Calu3 (cell line): ENCODE measurements at regions of chr15 and their contacts with region 1.

Region 1: GRCh38 chr15:70488002-70488605 is 275.3 kb downstream of the UACA start:
- DNase-seq: peak; percentile 86
- H3K4me3 Mint-ChIP-seq: no peak overlapping the region
- H3K27ac Mint-ChIP-seq: no peak overlapping the region
- H3K4me1 Mint-ChIP-seq: peaks cover 45% of the 10 kb centered on the region
- H3K27me3 Mint-ChIP-seq: peaks cover 4% of the 10 kb centered on the region
- CTCF ChIP-seq: peak; percentile 95

Region 2: DNA sequence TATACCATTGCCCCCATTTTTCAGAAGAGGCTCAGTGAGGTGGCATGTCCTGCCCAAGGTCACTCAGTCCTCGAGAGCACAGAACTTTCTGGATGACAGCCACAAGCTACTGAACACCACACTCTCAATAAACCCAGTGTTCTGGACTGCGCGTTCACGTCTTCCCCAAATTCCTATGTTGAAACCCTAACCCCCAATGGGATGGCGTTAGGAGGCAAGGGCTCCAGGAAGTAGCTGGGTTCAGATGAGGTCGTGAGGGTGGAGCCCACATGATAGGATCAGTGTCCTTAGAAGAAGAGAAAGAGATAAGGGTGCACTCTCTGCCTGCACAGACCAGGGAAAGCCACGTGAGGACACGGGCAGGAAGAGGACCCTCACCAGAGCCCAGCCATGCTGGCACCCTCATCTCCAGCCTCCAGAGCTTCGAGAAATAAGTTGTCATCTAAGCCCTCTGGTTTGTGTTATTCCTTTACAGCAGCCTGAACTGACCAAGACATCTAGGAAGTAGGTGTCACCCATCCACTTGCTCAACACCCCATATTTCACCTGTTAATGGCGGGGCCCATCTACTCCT is 48.7 kb before region 1 on chr15:
- CTCF ChIA-PET with region 1: no interaction called
- intact Hi-C with region 1: no loop called
- DNase-seq: no peak
- H3K4me3 Mint-ChIP-seq: no peak overlapping the region
- H3K27ac Mint-ChIP-seq: no peak overlapping the region
- H3K4me1 Mint-ChIP-seq: peaks cover 25% of the 10 kb centered on the region
- H3K27me3 Mint-ChIP-seq: peaks cover 34% of the 10 kb centered on the region
- CTCF ChIP-seq: no peak

Region 3: GRCh38 chr15:70474471-70475396 is 13.4 kb before region 1 on chr15:
- CTCF ChIA-PET with region 1: interaction called, 10 read pairs
- intact Hi-C with region 1: no loop called
- DNase-seq: peak; percentile 66
- H3K4me3 Mint-ChIP-seq: peak overlapping the region; percentile 50
- H3K27ac Mint-ChIP-seq: peak overlapping the region; percentile 75
- H3K4me1 Mint-ChIP-seq: peaks cover 29% of the 10 kb centered on the region
- H3K27me3 Mint-ChIP-seq: peaks cover 6% of the 10 kb centered on the region
- CTCF ChIP-seq: no peak

Region 4: GRCh38 chr15:70504299-70504951 is 16.3 kb after region 1 on chr15:
- CTCF ChIA-PET with region 1: interaction called, 16 read pairs
- intact Hi-C with region 1: no loop called
- DNase-seq: no peak
- H3K4me3 Mint-ChIP-seq: peak overlapping the region; percentile 24
- H3K27ac Mint-ChIP-seq: peak overlapping the region; percentile 87
- H3K4me1 Mint-ChIP-seq: peaks cover 85% of the 10 kb centered on the region
- H3K27me3 Mint-ChIP-seq: no peaks in the 10 kb centered on the region
- CTCF ChIP-seq: no peak

Region 5: DNA sequence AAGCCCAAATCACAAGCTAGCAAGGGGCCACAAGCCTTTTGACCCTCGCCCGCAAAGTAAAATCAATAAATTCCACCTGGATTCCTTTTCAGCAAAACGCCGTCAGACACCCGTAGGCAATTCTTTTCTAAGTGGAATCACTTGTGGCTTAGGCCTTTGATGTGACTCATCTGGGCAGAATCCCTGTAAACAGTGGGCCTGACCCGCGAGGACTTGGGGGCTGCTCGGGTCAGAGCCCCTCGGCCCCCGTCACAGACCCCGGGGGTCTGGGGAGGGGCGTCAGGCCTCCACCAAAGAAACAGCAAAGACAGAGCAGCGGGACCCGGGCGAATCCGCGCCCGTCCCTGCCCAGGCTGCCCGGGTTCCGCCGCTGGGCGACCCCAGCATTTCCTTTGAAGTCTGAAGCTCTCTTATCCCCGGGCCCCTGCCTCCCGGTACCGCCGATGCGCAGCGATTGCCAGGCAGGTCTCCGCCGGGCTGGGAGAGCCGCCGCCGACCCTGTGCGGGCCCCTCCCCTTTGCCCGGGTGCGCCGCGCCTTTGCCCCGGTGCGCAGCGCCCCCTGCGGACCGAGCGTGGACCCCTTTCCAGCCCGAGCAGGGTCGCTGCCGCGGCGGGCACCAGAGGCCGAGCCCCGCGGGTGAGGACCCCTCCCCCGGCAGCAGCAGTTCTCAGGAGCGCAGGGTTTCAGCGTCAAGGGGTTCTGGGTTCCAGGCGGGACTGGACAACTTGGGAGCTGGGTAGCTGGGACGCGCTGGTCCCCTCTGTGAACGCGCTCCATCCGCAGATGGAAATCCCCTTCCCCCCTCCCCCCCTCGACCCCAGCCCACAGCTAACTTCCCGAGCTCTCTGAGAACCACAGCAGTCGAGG is 97.0 kb after region 1 on chr15:
- CTCF ChIA-PET with region 1: no interaction called
- intact Hi-C with region 1: loop called (anchors 5 kb)
- DNase-seq: peak; percentile 82
- H3K4me3 Mint-ChIP-seq: peak overlapping the region; percentile 73
- H3K27ac Mint-ChIP-seq: no peak overlapping the region
- H3K4me1 Mint-ChIP-seq: peaks cover 11% of the 10 kb centered on the region
- H3K27me3 Mint-ChIP-seq: no peaks in the 10 kb centered on the region
- CTCF ChIP-seq: peak; percentile 79